ENCODE measurements at regions of chr10 and their contacts with region 1.

Region 1: GRCh38 chr10:124688889-124689670 is 55.1 kb downstream of the FAM53B start:
- DNase-seq: peak; percentile 93
- ATAC-seq: peak; percentile 96
- H3K4me3 ChIP-seq: no peak overlapping the region
- H3K27ac ChIP-seq: peak overlapping the region; percentile 56
- H3K4me1 ChIP-seq: peaks cover 53% of the 10 kb centered on the region
- H3K27me3 ChIP-seq: no peaks in the 10 kb centered on the region
- CTCF ChIP-seq: no peak
- EP300 ChIP-seq: peak; percentile 90 to 95
- POLR2A ChIP-seq: no peak
- RAD21 ChIP-seq: peak; percentile 31; the same call in 1 of the 2 replicates

Region 2: GRCh38 chr10:124626759-124627380 is 62.2 kb before region 1 on chr10:
- CTCF ChIA-PET with region 1: no interaction called
- POLR2A ChIA-PET with region 1: interaction called, 4 read pairs
- RAD21 ChIA-PET with region 1: interaction called, 3 read pairs
- SMC1A ChIA-PET with region 1: interaction called, 16 read pairs
- in situ Hi-C with region 1: no loop called
- intact Hi-C with region 1: no loop called
- DNase-seq: peak; percentile 38
- ATAC-seq: peak; percentile 80
- H3K4me3 ChIP-seq: no peak overlapping the region
- H3K27ac ChIP-seq: no peak overlapping the region; the same call in 1 of the 2 replicates
- H3K4me1 ChIP-seq: peaks cover 25% of the 10 kb centered on the region
- H3K27me3 ChIP-seq: no peaks in the 10 kb centered on the region
- CTCF ChIP-seq: peak in 2 of 3 experiments; percentile 24 to 30; a peak in 4 of 6 replicates
- EP300 ChIP-seq: 0 out of 4 replicates have a peak, but pooled peaks of 1 of the 2 experiments have one; percentile 13
- POLR2A ChIP-seq: no peak
- RAD21 ChIP-seq: peak; percentile 21; the same call in 1 of the 2 replicates

Region 3: DNA sequence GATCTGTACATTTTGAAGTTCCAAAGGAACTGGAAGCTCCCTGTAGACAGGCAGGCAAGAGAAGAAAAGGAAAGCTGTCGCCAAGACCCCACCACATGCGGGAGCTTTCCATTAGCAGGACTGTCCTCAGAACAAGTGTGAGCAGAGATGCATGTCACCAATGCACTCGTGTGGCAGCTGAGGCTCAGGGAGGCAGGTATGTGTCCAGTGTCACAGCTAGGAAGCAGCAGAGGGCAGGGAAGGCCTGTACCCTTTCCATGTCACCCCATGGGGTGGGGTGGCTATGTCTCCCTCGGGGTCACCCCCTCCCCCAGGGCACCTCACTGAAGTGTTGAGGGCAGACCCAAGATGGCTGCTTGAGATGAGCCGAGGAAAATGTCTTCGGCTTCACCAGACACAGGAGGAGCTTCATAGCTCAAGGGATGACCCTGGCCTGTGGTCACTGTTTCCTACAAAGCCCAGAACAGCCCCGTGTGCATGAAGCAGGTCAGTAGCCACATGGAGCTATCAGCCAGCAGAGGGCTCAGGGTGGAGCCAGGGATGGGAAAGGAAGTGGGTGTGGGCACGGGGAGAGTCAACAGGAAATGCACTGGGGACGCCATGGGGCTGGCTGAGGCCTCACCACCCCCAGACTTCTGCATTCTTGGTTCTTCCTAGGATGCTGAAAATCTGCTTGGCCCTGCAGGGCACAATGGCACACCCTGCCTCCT is 41.5 kb before region 1 on chr10:
- CTCF ChIA-PET with region 1: interaction called, 25 read pairs
- POLR2A ChIA-PET with region 1: interaction called, 8 read pairs
- RAD21 ChIA-PET with region 1: interaction called, 35 read pairs
- SMC1A ChIA-PET with region 1: interaction called, 54 read pairs
- in situ Hi-C with region 1: no loop called
- intact Hi-C with region 1: loop called (anchors 5 kb)
- DNase-seq: peak; percentile 50
- ATAC-seq: peak; percentile 79
- H3K4me3 ChIP-seq: no peak overlapping the region
- H3K27ac ChIP-seq: peak overlapping the region; percentile 87
- H3K4me1 ChIP-seq: peaks cover 49% of the 10 kb centered on the region
- H3K27me3 ChIP-seq: no peaks in the 10 kb centered on the region
- CTCF ChIP-seq: peak; percentile 37 to 41 (median 40); a peak in 5 of 6 replicates
- EP300 ChIP-seq: no peak; a peak in 1 of 4 replicates
- POLR2A ChIP-seq: no peak
- RAD21 ChIP-seq: peak; percentile 43

Region 4: DNA sequence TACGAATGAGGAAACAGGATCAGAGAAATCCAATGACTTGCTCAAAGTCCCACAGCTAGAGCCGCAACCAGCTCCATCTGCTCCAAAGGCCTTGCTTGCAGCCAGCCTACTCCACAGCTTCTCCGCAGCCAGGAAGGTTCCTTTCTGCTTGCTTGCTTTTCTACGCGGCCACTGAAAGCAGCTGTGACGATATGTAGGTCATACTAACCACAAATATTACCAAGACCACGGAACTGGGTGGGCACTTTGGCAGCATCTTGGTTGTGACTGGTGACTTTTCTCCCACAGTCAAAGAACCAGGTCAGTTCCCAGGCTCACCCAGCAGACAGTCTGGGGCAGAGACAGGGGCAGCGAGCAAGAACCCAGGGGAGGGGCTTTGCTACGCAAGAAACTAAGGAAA is 31.3 kb before region 1 on chr10:
- CTCF ChIA-PET with region 1: no interaction called
- POLR2A ChIA-PET with region 1: interaction called, 4 read pairs
- RAD21 ChIA-PET with region 1: interaction called, 6 read pairs
- SMC1A ChIA-PET with region 1: interaction called, 24 read pairs
- in situ Hi-C with region 1: no loop called
- intact Hi-C with region 1: no loop called
- DNase-seq: peak; percentile 40
- ATAC-seq: peak; percentile 85
- H3K4me3 ChIP-seq: no peak overlapping the region
- H3K27ac ChIP-seq: peak overlapping the region; percentile 6; the same call in 1 of the 2 replicates
- H3K4me1 ChIP-seq: peaks cover 13% of the 10 kb centered on the region
- H3K27me3 ChIP-seq: no peaks in the 10 kb centered on the region
- CTCF ChIP-seq: no peak
- EP300 ChIP-seq: no peak
- POLR2A ChIP-seq: no peak
- RAD21 ChIP-seq: no peak

Region 5: GRCh38 chr10:124677749-124678556 is 11.1 kb before region 1 on chr10:
- CTCF ChIA-PET with region 1: interaction called, 3 read pairs
- POLR2A ChIA-PET with region 1: no interaction called
- RAD21 ChIA-PET with region 1: interaction called, 6 read pairs
- SMC1A ChIA-PET with region 1: interaction called, 37 read pairs
- in situ Hi-C with region 1: no loop called
- intact Hi-C with region 1: no loop called
- DNase-seq: no peak
- ATAC-seq: no peak
- H3K4me3 ChIP-seq: no peak overlapping the region
- H3K27ac ChIP-seq: no peak overlapping the region
- H3K4me1 ChIP-seq: no peaks in the 10 kb centered on the region
- H3K27me3 ChIP-seq: no peaks in the 10 kb centered on the region
- CTCF ChIP-seq: no peak
- EP300 ChIP-seq: no peak
- POLR2A ChIP-seq: no peak
- RAD21 ChIP-seq: no peak

Region 6: GRCh38 chr10:124732931-124733570 is 44.0 kb after region 1 on chr10:
- CTCF ChIA-PET with region 1: interaction called, 8 read pairs
- POLR2A ChIA-PET with region 1: interaction called, 22 read pairs
- RAD21 ChIA-PET with region 1: interaction called, 28 read pairs
- SMC1A ChIA-PET with region 1: interaction called, 334 read pairs
- in situ Hi-C with region 1: no loop called
- intact Hi-C with region 1: no loop called
- DNase-seq: peak; percentile 77
- ATAC-seq: peak; percentile 85
- H3K4me3 ChIP-seq: peak overlapping the region; percentile 50
- H3K27ac ChIP-seq: peak overlapping the region; percentile 71
- H3K4me1 ChIP-seq: peaks cover 69% of the 10 kb centered on the region
- H3K27me3 ChIP-seq: no peaks in the 10 kb centered on the region
- CTCF ChIP-seq: no peak
- EP300 ChIP-seq: no peak
- POLR2A ChIP-seq: peak; percentile 59
- RAD21 ChIP-seq: no peak

Region 7: GRCh38 chr10:124748166-124748565 is 59.1 kb after region 1 on chr10:
- CTCF ChIA-PET with region 1: interaction called, 106 read pairs
- POLR2A ChIA-PET with region 1: interaction called, 46 read pairs
- RAD21 ChIA-PET with region 1: interaction called, 130 read pairs
- SMC1A ChIA-PET with region 1: interaction called, 133 read pairs
- in situ Hi-C with region 1: no loop called
- intact Hi-C with region 1: no loop called
- DNase-seq: no peak
- ATAC-seq: no peak
- H3K4me3 ChIP-seq: no peak overlapping the region
- H3K27ac ChIP-seq: no peak overlapping the region
- H3K4me1 ChIP-seq: peaks cover 4% of the 10 kb centered on the region; the same call in 1 of the 2 replicates
- H3K27me3 ChIP-seq: no peaks in the 10 kb centered on the region
- CTCF ChIP-seq: no peak
- EP300 ChIP-seq: no peak
- POLR2A ChIP-seq: no peak
- RAD21 ChIP-seq: no peak

Region 8: DNA sequence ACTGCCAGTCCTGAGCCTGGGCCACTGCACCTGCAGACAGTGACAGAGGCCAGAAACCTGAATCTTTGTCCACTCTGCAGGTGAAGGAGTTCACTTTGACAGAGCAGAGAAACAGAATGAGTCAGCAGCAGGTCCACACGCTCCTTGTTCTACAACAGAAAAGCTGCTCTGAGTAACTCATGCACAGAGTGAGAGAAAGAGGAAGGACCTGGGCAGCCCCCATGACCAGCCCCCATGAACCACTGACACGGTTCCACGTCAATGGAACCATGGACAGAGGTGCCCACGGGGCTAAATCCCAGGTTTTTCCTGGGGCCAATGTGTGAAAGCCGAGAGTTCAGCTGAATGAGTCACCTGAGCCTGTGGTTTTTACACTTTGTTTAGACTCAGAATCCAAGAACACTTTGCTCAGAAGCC is 512.0 kb after region 1 on chr10:
- CTCF ChIA-PET with region 1: no interaction called
- POLR2A ChIA-PET with region 1: no interaction called
- RAD21 ChIA-PET with region 1: no interaction called
- SMC1A ChIA-PET with region 1: no interaction called
- in situ Hi-C with region 1: no loop called
- intact Hi-C with region 1: no loop called
- DNase-seq: peak; percentile 17
- ATAC-seq: peak; percentile 88
- H3K4me3 ChIP-seq: no peak overlapping the region
- H3K27ac ChIP-seq: no peak overlapping the region
- H3K4me1 ChIP-seq: peaks cover 20% of the 10 kb centered on the region
- H3K27me3 ChIP-seq: peaks cover 0 to 2% of the 10 kb centered on the region in 2 experiments; a peak in 1 of 4 replicates
- CTCF ChIP-seq: no peak
- EP300 ChIP-seq: no peak
- POLR2A ChIP-seq: no peak
- RAD21 ChIP-seq: no peak